ENCODE measurements at regions of chr13 and their contacts with region 1.

Region 1: GRCh38 chr13:27353166-27353583 is 71.2 kb upstream of the GTF3A start:
- DNase-seq: peak; percentile 68
- H3K4me3 Mint-ChIP-seq: no peak overlapping the region
- H3K27ac Mint-ChIP-seq: no peak overlapping the region
- H3K4me1 Mint-ChIP-seq: peaks cover 12% of the 10 kb centered on the region
- H3K27me3 Mint-ChIP-seq: peaks cover 9% of the 10 kb centered on the region

Region 2: DNA sequence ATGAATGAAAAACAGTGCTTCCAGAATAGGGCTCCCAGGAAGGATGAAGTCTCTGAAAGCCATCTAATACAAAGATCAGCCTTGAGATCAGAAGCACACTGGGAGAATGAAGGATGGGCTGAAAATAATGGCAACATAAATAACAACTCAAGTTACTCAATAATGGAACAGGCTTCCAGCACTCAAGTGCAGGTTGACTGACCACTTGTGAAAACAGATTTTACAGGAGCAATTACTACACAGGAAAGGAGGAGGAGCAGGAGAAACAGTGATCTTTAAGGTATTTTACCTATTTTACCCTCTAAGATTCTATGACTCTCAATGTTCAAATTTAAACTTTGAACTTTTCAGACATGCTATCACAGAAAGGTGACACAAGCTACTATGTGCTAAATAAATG is 287.6 kb before region 1 on chr13:
- CTCF ChIA-PET with region 1: no interaction called
- intact Hi-C with region 1: no loop called
- DNase-seq: no peak
- H3K4me3 Mint-ChIP-seq: no peak overlapping the region
- H3K27ac Mint-ChIP-seq: no peak overlapping the region
- H3K4me1 Mint-ChIP-seq: peaks cover 9% of the 10 kb centered on the region
- H3K27me3 Mint-ChIP-seq: no peaks in the 10 kb centered on the region

Region 3: GRCh38 chr13:27293873-27294515 is 59.2 kb before region 1 on chr13:
- CTCF ChIA-PET with region 1: interaction called, 3 read pairs
- intact Hi-C with region 1: loop called (anchors 1 kb)
- DNase-seq: peak; percentile 16
- H3K4me3 Mint-ChIP-seq: no peak overlapping the region
- H3K27ac Mint-ChIP-seq: peak overlapping the region; percentile 26
- H3K4me1 Mint-ChIP-seq: peaks cover 32% of the 10 kb centered on the region
- H3K27me3 Mint-ChIP-seq: no peaks in the 10 kb centered on the region

Region 4: GRCh38 chr13:27339299-27339698 is 13.9 kb before region 1 on chr13:
- CTCF ChIA-PET with region 1: interaction called, 29 read pairs
- intact Hi-C with region 1: no loop called
- DNase-seq: peak; percentile 65
- H3K4me3 Mint-ChIP-seq: no peak overlapping the region
- H3K27ac Mint-ChIP-seq: no peak overlapping the region
- H3K4me1 Mint-ChIP-seq: peaks cover 2% of the 10 kb centered on the region
- H3K27me3 Mint-ChIP-seq: no peaks in the 10 kb centered on the region

Measured in activated naive CD4-positive, alpha-beta T cell treated with anti-CD3 and anti-CD28 coated beads for 36 hours (primary cell).